MCF 10A (cell line): ENCODE measurements at regions of chr18 and their contacts with region 1.

Region 1: DNA sequence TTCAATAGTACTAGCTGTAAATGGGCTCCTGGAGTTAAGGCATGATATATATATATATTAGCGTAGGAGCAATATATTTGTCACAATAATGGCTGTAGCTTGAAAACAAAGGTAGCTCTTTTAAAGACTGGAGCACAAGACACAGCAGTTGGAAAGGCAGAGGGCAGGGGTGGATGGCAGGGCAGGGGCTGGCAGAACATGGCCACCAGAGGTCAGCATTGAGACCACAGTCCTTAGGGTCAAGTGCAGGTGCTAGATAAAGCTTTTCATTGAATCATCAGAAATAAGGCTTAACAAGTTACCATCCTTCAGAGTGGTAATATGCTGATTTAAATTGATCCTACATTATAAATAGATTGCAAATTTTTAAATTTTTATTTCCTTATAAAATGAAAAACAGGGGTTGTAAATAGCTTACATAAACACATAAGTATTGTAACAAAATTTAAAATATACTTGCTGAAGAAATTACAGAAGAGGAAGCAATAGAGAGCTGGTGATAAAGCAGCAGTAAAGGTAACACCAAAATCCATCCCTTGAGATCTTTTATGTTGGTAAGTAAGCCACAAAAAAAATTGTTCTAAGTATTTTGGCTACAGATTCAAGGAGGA is 161.2 kb upstream of the PIEZO2 start:
- DNase-seq: peak; percentile 59
- H3K4me3 Mint-ChIP-seq: no peak overlapping the region
- H3K27ac Mint-ChIP-seq: no peak overlapping the region
- H3K4me1 Mint-ChIP-seq: peaks cover 7% of the 10 kb centered on the region
- H3K27me3 Mint-ChIP-seq: peaks cover 26% of the 10 kb centered on the region
- CTCF ChIP-seq: peak; percentile 78

Region 2: DNA sequence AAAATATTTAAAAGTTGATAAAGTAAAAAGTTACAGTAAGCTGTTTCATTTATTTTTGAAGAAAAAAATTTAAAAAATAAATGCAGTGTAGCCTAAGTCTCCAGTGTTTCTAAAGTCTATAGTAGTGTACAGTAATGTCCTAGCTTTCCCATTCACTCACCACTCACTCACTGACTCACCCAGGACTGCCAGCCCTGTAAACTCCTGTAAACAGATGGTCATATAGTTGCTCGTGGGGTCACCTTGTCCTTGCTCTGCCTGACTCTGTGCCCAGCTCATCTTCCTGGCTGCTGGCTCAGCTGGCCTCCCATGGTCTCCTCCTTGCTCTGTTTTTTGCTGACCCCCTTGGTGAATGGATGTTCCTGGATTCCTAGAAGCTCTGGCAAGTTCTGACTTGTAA is 1216.4 kb before region 1 on chr18:
- CTCF ChIA-PET with region 1: no interaction called
- POLR2A ChIA-PET with region 1: no interaction called
- intact Hi-C with region 1: no loop called
- DNase-seq: peak; percentile 64
- H3K4me3 Mint-ChIP-seq: no peak overlapping the region
- H3K27ac Mint-ChIP-seq: peak overlapping the region; percentile 21
- H3K4me1 Mint-ChIP-seq: peaks cover 6% of the 10 kb centered on the region
- H3K27me3 Mint-ChIP-seq: no peaks in the 10 kb centered on the region
- CTCF ChIP-seq: no peak

Region 3: GRCh38 chr18:11096411-11096810 is 214.2 kb before region 1 on chr18:
- CTCF ChIA-PET with region 1: no interaction called
- POLR2A ChIA-PET with region 1: no interaction called
- intact Hi-C with region 1: no loop called
- DNase-seq: no peak
- H3K4me3 Mint-ChIP-seq: no peak overlapping the region
- H3K27ac Mint-ChIP-seq: no peak overlapping the region
- H3K4me1 Mint-ChIP-seq: peaks cover 5% of the 10 kb centered on the region
- H3K27me3 Mint-ChIP-seq: no peaks in the 10 kb centered on the region
- CTCF ChIP-seq: no peak

Region 4: DNA sequence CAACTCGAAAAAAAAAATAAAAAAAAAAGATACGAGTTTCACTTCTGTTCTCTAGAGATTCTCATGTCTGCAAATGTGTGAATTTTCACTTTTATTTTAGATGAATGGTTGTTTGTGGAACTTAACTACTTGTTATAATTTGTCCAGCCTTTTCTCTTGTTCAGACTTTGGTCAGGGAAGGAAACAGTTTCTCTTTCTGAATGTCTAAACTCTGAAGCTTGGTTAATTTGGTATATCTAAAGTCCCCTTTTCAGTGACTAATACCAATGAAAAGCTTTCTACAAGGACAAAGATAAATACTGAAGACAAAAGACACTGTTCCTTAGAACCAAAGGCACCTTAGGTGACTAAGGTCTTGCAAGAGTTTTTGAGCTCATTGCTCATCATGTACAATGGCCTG is 16.8 kb before region 1 on chr18:
- CTCF ChIA-PET with region 1: interaction called, 22 read pairs
- POLR2A ChIA-PET with region 1: no interaction called
- intact Hi-C with region 1: no loop called
- DNase-seq: no peak
- H3K4me3 Mint-ChIP-seq: no peak overlapping the region
- H3K27ac Mint-ChIP-seq: no peak overlapping the region
- H3K4me1 Mint-ChIP-seq: no peaks in the 10 kb centered on the region
- H3K27me3 Mint-ChIP-seq: peaks cover 46% of the 10 kb centered on the region
- CTCF ChIP-seq: no peak

Region 5: GRCh38 chr18:11387880-11388279 is 77.3 kb after region 1 on chr18:
- CTCF ChIA-PET with region 1: interaction called, 5 read pairs
- POLR2A ChIA-PET with region 1: no interaction called
- intact Hi-C with region 1: loop called (anchors 2 kb)
- DNase-seq: peak; percentile 84
- H3K4me3 Mint-ChIP-seq: no peak overlapping the region
- H3K27ac Mint-ChIP-seq: no peak overlapping the region
- H3K4me1 Mint-ChIP-seq: peaks cover 6% of the 10 kb centered on the region
- H3K27me3 Mint-ChIP-seq: peaks cover 14% of the 10 kb centered on the region
- CTCF ChIP-seq: peak; percentile 46

Region 6: DNA sequence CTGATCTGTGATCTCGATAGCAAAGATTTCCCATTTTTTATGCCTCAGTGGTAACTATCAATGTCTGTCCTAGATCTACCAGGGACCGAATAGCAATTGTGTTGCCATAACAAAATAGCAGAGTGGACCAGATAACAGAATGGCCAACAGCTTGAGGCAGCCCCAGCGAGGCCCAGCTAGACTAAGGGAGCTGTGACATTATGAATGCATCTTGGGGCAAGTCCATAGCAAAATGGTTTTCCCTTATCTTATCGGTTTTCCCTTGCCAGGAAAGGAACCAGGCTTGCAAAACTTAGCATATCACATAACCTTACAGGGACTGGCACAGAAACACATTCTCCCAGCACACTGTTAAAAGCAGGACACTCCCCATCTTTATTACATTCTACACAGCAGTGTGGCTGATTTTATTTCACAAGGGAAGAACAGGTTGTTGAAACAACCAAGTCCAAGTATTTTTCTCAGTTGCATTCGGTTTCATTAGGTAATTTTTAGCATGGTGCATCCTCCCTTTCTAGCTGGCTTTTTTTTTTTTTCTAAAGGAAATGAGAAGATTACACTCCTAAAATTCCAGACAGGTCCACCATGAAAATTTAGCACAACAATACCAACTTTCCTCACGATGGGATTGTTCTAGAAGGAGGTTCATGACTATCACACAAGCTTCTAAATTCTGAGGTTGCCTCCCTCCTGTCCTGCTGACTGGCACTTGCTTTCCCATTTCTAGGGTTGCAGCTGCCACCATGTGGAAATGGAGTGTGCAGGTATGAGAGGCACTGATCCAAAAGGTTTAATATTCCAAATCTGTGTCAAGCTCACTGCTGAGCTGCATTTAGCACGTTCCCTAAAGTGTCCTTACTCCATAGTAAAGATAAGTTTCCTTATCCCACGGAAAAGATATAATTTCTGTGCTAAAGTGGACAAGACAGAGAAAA is 201.8 kb after region 1 on chr18:
- CTCF ChIA-PET with region 1: interaction called, 114 read pairs
- POLR2A ChIA-PET with region 1: interaction called, 18 read pairs
- intact Hi-C with region 1: loop called (anchors 1 kb)
- DNase-seq: peak; percentile 68
- H3K4me3 Mint-ChIP-seq: no peak overlapping the region
- H3K27ac Mint-ChIP-seq: no peak overlapping the region
- H3K4me1 Mint-ChIP-seq: no peaks in the 10 kb centered on the region
- H3K27me3 Mint-ChIP-seq: peaks cover 17% of the 10 kb centered on the region
- CTCF ChIP-seq: peak; percentile 74

Region 7: DNA sequence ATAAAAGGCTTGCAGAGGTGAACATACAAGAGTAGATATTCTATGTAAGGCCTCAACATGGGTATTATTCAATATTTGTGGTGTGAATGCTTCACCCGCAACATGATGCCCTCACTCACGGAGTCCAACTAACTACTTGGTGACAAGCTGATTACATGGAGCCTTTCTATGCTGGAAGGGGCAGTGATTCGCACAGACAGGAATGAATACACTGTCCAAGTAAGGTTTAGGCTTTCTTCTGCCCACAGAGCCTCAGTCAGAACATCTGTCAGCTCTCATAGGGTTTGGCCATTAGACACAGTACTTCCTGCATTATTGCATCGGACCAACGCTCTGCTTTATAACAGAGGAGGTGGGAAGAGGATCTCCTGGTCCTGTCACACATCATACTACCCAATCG is 218.5 kb after region 1 on chr18:
- CTCF ChIA-PET with region 1: interaction called, 13 read pairs
- POLR2A ChIA-PET with region 1: no interaction called
- intact Hi-C with region 1: no loop called
- DNase-seq: no peak
- H3K4me3 Mint-ChIP-seq: no peak overlapping the region
- H3K27ac Mint-ChIP-seq: no peak overlapping the region
- H3K4me1 Mint-ChIP-seq: peaks cover 6% of the 10 kb centered on the region
- H3K27me3 Mint-ChIP-seq: no peaks in the 10 kb centered on the region
- CTCF ChIP-seq: no peak